Naive thymus-derived CD4-positive, alpha-beta T cell (primary cell): ENCODE measurements at regions of chr14 and their contacts with region 1.

Region 1: GRCh38 chr14:64928239-64929013 is 14.1 kb downstream of the GPX2 start:
- DNase-seq: peak in 7 of 9 donors; percentile 28 to 81 (median 76)
- ATAC-seq: peak; percentile 84
- H3K4me3 ChIP-seq: peak overlapping the region; percentile 16
- H3K4me3 Mint-ChIP-seq: no peak overlapping the region
- H3K27ac ChIP-seq: peak overlapping the region; percentile 67
- H3K27ac Mint-ChIP-seq: no peak overlapping the region
- H3K4me1 ChIP-seq: peaks cover 40 to 68% of the 10 kb centered on the region in 2 donors
- H3K4me1 Mint-ChIP-seq: peaks cover 17 to 36% (median 29%) of the 10 kb centered on the region in 7 donors
- H3K27me3 ChIP-seq: no peaks in the 10 kb centered on the region
- H3K27me3 Mint-ChIP-seq: no peaks in the 10 kb centered on the region

Region 2: DNA sequence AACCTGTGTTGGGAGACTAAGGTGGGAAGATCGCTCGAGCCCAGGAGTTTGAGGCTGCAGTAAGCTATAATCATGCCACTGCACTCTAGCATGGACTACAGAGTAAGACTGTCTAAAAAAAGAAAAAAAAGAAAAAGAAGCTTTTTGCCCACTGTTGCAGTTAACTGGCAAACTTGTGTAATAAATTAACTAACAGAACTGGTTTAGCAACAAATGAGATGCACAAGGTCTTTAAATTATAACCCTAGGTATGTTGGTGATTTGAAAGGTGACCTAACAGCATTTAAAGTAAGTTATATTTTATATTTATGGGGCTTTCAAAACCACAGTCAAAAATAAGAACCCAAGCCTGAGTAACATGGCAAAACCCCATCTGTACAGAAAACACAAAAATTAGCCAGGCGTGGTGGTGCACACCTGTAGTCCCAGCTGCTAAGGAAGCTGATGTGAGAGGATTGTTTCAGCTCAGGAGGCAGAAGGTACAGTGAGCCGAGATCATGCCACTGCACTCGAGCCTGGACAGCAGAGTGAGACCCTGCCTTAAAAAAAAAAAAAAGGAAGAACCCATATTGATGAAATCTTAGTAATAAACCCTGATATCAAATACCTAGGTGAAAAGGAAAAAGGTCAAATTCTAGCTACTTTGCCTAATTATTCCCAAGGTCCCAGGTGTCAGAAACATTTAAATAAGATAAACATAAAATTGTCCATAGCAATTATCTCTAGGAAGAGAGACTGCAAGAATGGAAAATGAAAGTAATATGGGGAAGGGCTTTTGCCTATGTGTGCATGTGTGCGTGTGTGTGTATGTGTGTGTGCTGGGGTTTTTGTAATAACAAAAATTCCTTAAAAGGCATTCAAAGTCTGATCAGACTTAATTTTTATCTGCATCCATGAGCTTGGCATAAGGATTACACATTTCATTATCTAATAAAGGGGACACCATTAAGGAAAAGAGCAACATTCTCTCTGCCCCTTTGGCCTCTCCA is 1060.2 kb before region 1 on chr14:
- CTCF ChIA-PET with region 1: no interaction called
- POLR2A ChIA-PET with region 1: no interaction called
- intact Hi-C with region 1: loop called in 1 of 2 experiments (anchors 10 kb)
- DNase-seq: peak in 6 of 9 donors; percentile 15 to 44 (median 28)
- ATAC-seq: no peak
- H3K4me3 ChIP-seq: no peak overlapping the region
- H3K4me3 Mint-ChIP-seq: peak overlapping the region; percentile 46 to 84 (median 75)
- H3K27ac ChIP-seq: peak overlapping the region; percentile 36
- H3K27ac Mint-ChIP-seq: peak overlapping the region; percentile 84 to 98 (median 92)
- H3K4me1 ChIP-seq: peaks cover 36 to 60% of the 10 kb centered on the region in 2 donors
- H3K4me1 Mint-ChIP-seq: peaks cover 37 to 78% (median 64%) of the 10 kb centered on the region in 7 donors
- H3K27me3 ChIP-seq: no peaks in the 10 kb centered on the region
- H3K27me3 Mint-ChIP-seq: no peaks in the 10 kb centered on the region

Region 3: DNA sequence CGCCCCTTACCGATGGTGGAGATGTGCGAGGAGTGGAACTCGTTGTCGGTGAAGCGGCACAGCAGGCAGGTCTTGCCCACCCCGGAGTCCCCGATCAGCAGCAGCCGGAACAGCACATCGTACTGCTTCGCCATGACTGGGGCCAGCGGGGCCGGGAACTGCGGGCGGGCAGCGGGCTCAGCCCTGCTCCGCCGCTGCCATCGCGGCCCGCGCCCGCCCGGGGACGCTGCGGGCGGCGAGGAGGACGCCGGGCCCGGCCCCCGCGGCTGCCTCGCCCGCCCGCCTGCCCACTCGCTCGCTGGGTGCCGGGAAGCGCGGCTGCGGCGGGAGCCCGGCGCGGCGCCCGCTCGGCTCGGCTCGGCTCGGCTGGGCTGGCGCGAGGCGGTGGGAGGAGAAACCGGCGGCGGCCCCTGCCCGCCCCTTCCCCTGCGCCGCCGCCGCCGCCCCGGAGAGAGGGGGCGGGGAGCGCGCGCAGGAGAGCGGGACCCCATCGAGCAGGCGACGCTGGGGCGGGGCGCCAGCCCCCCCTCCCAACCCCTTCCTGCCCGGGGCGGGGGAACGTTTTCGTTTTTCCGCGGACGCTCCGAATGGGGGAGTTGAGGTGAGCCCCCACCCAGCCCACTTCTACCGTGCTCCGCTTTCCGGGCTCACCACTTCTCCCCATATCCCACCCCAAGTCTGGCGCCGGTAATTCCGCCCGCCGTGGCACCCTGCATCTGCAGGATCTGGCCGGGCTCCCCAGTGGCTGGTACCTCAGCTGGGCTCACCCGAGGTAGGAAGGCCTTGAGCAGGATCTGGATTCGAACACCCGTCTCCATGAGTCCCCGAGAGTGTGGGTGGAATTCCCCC is 43.7 kb after region 1 on chr14 and contains the start of gene RAB15:
- CTCF ChIA-PET with region 1: no interaction called
- POLR2A ChIA-PET with region 1: interaction called, 5 read pairs
- intact Hi-C with region 1: loop called (anchors 2 to 5 kb)
- DNase-seq: peak; percentile 23 to 66 (median 44)
- ATAC-seq: peak; percentile 73
- H3K4me3 ChIP-seq: peak within 1 kb of the TSS; percentile 68
- H3K4me3 Mint-ChIP-seq: peak within 1 kb of the TSS; percentile 76 to 92 (median 84)
- H3K27ac ChIP-seq: peak within 1 kb of the TSS; percentile 60
- H3K27ac Mint-ChIP-seq: peak within 1 kb of the TSS; percentile 42 to 82 (median 70)
- H3K4me1 ChIP-seq: peaks cover 0 to 10% of the 10 kb centered on the region in 2 donors
- H3K4me1 Mint-ChIP-seq: peaks cover 10 to 32% (median 24%) of the 10 kb centered on the region in 7 donors
- H3K27me3 ChIP-seq: no peaks in the 10 kb centered on the region
- H3K27me3 Mint-ChIP-seq: peaks cover 0 to 20% (median 0%) of the 10 kb centered on the region in 5 donors
- total RNA-seq, gene RAB15: 4.9 to 7.1 (median 5.9) TPM

Region 4: GRCh38 chr14:65336191-65336591 is 407.8 kb after region 1 on chr14:
- CTCF ChIA-PET with region 1: no interaction called
- POLR2A ChIA-PET with region 1: no interaction called
- intact Hi-C with region 1: no loop called
- DNase-seq: peak in 2 of 9 donors; percentile 10 to 60
- ATAC-seq: peak; percentile 37
- H3K4me3 ChIP-seq: no peak overlapping the region
- H3K4me3 Mint-ChIP-seq: peak overlapping the region in 6 of 10 donors; percentile 2 to 83 (median 4)
- H3K27ac ChIP-seq: no peak overlapping the region
- H3K27ac Mint-ChIP-seq: peak overlapping the region; percentile 16 to 91 (median 64)
- H3K4me1 ChIP-seq: peaks cover 0 to 16% of the 10 kb centered on the region in 2 donors
- H3K4me1 Mint-ChIP-seq: peaks cover 21 to 60% (median 42%) of the 10 kb centered on the region in 7 donors
- H3K27me3 ChIP-seq: no peaks in the 10 kb centered on the region
- H3K27me3 Mint-ChIP-seq: no peaks in the 10 kb centered on the region